ENCODE measurements at regions of chr17 and their contacts with region 1.

Region 1: GRCh38 chr17:72349491-72349995 is 228.7 kb downstream of the SOX9 start:
- DNase-seq: no peak
- H3K27ac ChIP-seq: peak overlapping the region; percentile 75
- CTCF ChIP-seq: no peak

Region 2: DNA sequence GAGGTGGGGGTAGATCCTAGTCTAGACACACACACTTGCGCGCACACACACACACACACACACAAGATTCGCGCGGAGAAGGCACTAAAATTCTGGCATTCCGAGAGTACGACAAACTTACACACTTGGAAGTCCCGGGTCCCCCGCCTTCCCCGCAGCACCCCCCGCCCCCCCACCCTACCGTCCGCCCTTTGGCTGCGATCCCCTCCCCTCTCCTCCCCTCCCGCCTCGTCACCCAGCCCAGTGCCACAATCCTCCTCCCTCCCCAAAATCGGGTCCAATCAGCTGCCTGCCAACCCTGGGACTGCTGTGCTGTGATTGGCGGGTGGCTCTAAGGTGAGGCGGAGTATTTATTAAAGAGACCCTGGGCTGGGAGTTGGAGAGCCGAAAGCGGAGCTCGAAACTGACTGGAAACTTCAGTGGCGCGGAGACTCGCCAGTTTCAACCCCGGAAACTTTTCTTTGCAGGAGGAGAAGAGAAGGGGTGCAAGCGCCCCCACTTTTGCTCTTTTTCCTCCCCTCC is 228.8 kb before region 1 on chr17 and contains the start of gene SOX9:
- CTCF ChIA-PET with region 1: no interaction called
- POLR2A ChIA-PET with region 1: interaction called, 12 read pairs
- DNase-seq: peak; percentile 99
- H3K27ac ChIP-seq: peak within 1 kb of the TSS; percentile 89
- CTCF ChIP-seq: no peak

Region 3: GRCh38 chr17:72287586-72287985 is 62.0 kb before region 1 on chr17:
- CTCF ChIA-PET with region 1: no interaction called
- POLR2A ChIA-PET with region 1: no interaction called
- DNase-seq: no peak
- H3K27ac ChIP-seq: no peak overlapping the region
- CTCF ChIP-seq: no peak

Region 4: GRCh38 chr17:72388765-72389473 is 39.4 kb after region 1 on chr17:
- CTCF ChIA-PET with region 1: no interaction called
- POLR2A ChIA-PET with region 1: no interaction called
- DNase-seq: peak; percentile 64
- H3K27ac ChIP-seq: peak overlapping the region; percentile 51
- CTCF ChIP-seq: no peak

Region 5: GRCh38 chr17:72423718-72424117 is 74.2 kb after region 1 on chr17:
- CTCF ChIA-PET with region 1: no interaction called
- POLR2A ChIA-PET with region 1: interaction called, 12 read pairs
- DNase-seq: no peak
- H3K27ac ChIP-seq: peak overlapping the region; percentile 76
- CTCF ChIP-seq: no peak